SK-N-SH (cell line): ENCODE measurements at regions of chr2 and their contacts with region 1.

Region 1: DNA sequence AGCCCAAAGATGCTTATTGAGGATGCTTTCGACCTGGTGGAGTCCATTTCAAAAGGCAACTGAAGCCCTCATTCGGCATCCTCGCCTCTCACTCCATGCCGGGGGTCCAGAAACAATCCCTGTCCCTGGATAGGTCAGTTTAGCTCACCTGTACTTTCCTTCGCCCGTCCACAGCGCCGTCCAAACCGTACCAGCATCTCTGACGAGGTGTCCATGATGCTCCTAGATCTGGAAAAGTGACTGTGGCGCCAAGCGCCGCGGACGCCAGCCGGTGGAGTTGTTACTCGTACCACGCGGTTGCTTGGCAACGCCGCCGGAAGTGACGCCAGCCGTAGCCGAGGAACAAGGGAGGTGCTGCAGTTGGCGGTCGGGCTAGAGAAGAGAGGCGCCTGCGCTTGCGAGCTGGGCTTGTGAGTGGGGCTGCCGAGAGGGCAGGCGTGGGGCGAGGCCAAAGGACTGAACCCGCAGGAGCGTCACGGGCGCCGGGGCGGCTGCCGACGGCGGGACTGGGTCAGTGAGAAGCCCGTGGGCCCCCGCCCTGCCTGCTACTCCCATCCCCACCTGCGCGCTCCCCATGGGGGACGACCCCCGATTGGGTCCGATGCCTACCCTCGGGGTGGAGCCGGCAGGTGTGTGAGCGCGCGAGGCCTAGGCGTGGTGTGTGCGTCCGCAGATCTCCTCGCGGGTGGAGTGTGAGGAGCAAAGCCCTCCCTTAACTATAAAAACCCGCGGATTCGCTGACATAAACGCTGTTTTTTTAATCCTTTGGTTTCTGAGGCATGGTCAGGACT is at the starts of genes CFAP210 and PHOSPHO2:
- DNase-seq: peak; percentile 94
- H3K4me3 ChIP-seq: peak within 1 kb of the TSS; percentile 81 to 89
- H3K27ac ChIP-seq: peak within 1 kb of the TSS; percentile 76 to 83
- H3K4me1 ChIP-seq: peaks cover 5 to 7% of the 10 kb centered on the region in 2 experiments; a peak in 3 of 4 replicates
- H3K27me3 ChIP-seq: no peaks in the 10 kb centered on the region
- CTCF ChIP-seq: no peak
- EP300 ChIP-seq: no peak
- RAD21 ChIP-seq: peak; percentile 31; the same call in 1 of the 2 replicates
- polyA plus RNA-seq, gene CFAP210: 0.03 TPM in 1 of 2 replicates, not detected in the other
- polyA plus RNA-seq, gene PHOSPHO2: 0.99 and 1.1 TPM in 2 replicates

Region 2: DNA sequence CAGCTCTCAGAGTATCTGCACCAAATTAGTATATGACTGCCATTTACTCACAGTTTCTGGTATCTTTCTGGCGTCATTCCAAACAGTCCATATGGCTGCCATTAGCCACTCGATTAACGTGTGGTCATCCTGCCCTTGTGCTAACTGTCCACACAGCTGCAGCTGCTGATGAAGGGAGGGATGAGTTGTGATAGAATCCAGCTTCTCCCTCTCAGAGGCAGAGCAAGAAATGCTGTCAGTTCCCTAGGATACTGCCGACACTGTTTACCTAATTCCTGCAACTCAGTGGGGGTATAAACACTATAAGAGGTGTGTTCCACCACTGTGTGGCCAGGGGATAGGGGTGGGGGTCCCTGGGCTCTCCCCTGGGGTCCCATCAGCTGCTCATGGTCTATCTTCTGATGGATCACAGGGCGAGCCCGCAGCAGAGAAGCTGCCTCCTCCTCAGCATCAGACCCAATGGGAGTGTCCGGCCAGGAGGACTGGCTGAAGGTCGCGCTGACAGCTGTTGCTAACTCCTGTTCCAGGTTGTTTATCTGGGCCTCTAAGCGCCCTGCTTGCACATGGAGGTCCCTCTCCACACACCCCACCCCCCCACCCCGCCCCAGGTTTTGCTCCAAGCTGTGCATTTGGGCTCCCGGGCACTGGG is 22.1 kb after region 1 on chr2:
- CTCF ChIA-PET with region 1: interaction called, 20 read pairs
- POLR2A ChIA-PET with region 1: interaction called, 18 read pairs
- DNase-seq: peak; percentile 73
- H3K4me3 ChIP-seq: peak overlapping the region; percentile 50 to 61; a peak in 3 of 4 replicates
- H3K27ac ChIP-seq: peak overlapping the region in 1 of 2 experiments; percentile 100; a peak in 2 of 4 replicates
- H3K4me1 ChIP-seq: peaks cover 16 to 59% of the 10 kb centered on the region in 2 experiments; a peak in 2 of 4 replicates
- H3K27me3 ChIP-seq: no peaks in the 10 kb centered on the region
- CTCF ChIP-seq: no peak
- EP300 ChIP-seq: peak in 1 of 2 experiments; percentile 91; a peak in 3 of 4 replicates
- RAD21 ChIP-seq: peak; percentile 30; the same call in 1 of the 2 replicates

Region 3: GRCh38 chr2:169734169-169734847 is 40.0 kb after region 1 on chr2:
- CTCF ChIA-PET with region 1: interaction called, 32 read pairs
- POLR2A ChIA-PET with region 1: no interaction called
- DNase-seq: peak; percentile 83
- H3K4me3 ChIP-seq: peak overlapping the region; percentile 73 to 80
- H3K27ac ChIP-seq: peak overlapping the region in 1 of 2 experiments; percentile 86; a peak in 2 of 4 replicates
- H3K4me1 ChIP-seq: peaks cover 0 to 27% of the 10 kb centered on the region in 2 experiments; a peak in 2 of 4 replicates
- H3K27me3 ChIP-seq: no peaks in the 10 kb centered on the region
- CTCF ChIP-seq: no peak
- EP300 ChIP-seq: no peak
- RAD21 ChIP-seq: no peak

Region 4: DNA sequence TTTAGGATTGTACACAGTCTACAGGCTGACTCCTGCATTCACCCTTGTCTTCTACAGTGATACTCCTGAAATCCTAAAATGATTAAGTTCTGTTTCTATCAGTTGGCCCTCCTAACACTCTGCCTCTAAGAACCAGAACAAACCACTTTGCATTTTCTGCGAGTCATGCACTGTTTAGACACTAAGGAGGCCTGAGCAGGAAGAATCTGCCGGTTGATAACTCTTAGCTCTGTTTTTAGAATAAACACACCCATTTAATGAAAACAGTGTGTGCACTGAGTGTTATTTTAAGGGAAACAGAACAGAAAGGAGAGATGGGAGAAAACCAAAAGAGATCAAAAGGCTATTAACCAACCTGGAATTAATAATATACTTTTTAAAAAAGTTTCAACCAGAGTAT is 81.5 kb after region 1 on chr2:
- CTCF ChIA-PET with region 1: interaction called, 12 read pairs
- POLR2A ChIA-PET with region 1: no interaction called
- DNase-seq: no peak
- H3K4me3 ChIP-seq: no peak overlapping the region
- H3K27ac ChIP-seq: peak overlapping the region; percentile 59 to 62
- H3K4me1 ChIP-seq: no peaks in the 10 kb centered on the region; a peak in 1 of 4 replicates
- H3K27me3 ChIP-seq: no peaks in the 10 kb centered on the region
- CTCF ChIP-seq: no peak
- EP300 ChIP-seq: no peak
- RAD21 ChIP-seq: no peak

Region 5: DNA sequence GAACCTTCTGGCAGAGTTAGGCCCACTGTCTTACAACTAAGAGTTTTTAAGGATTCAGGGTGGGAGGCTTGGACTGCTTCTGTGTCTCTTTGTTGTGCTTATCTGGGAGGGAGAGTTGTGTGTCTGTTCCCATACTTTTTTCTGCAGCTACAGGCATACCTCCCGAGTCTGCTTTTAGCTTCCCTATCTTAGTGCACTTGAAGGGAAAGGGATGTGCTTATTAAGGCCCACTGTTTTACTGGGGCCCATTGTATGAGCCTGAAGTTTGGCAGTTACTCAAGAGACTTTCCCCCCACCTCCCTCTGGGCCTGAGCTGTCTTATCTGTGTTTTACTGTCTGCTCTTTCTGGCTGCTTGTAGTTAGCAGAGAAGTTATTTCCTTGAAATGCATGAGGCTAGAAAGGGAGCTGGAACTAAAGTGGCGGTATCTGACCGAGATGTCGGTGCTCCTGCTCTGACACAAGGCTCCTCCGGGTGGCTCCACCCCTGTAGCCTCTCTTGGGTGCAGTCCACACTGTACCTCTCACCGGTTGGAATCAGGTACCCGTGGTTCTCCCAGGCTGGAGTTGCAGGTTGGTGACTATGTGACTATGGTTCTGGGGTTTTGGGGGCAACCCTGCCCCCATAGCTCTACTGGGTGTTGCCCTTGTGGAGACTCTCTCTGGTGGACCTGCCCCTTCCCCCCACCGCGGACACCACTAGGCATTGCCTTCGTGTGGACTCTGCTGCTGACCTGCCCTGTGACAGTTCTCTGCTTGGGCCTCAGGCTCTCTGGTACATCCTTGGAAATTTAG is 145.8 kb after region 1 on chr2:
- CTCF ChIA-PET with region 1: no interaction called
- POLR2A ChIA-PET with region 1: no interaction called
- DNase-seq: no peak
- H3K4me3 ChIP-seq: no peak overlapping the region
- H3K27ac ChIP-seq: no peak overlapping the region
- H3K4me1 ChIP-seq: no peaks in the 10 kb centered on the region; a peak in 1 of 4 replicates
- H3K27me3 ChIP-seq: no peaks in the 10 kb centered on the region
- CTCF ChIP-seq: no peak
- EP300 ChIP-seq: no peak
- RAD21 ChIP-seq: no peak